Left lung (tissue), 14 donors: ENCODE measurements at regions of chr17 and their contacts with region 1.

Region 1: DNA sequence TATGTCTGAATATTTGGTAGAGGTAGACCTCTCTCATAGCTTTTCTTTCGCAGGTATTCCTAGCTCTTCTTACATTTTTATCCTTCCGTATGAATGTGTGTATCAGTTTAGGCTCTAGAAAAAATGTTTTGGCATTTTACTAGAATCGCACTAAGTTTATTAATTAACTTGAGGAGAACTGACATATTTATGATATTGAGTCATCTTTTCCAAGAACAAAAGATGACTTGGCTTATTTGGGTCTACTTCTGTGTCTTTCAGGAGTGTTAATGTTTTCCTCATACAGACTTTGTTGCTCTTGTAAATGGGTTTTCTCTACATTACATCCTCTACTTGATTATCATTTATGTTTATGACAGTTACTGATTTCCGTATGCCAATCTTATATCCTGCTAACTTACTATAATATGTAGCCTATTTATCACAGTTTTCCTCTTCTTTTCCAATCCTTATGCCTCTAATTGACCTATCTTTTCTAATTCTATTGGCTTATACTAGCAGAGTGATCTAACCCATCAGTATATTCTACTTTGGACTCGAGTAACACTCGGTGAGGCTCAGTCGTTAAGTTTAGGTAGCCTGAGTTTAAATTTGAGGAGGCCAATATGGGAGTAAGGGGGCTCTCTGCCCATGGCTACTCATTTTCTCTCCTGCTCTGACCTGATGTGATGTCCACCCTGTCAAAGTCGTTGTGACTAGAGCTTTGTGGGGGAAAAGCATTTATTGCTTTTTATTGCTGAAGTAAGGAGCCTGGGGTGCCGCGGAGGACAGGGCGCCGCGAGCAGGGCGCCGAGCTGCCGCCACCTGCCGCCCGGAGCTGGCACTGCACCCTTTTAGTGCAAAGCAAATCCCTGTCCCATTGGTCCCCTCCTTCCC is 20.0 kb downstream of the ST6GALNAC1 start:
- DNase-seq: peak; percentile 63 to 96 (median 78)
- ATAC-seq: peak; percentile 96
- H3K4me3 ChIP-seq: no peak overlapping the region
- H3K27ac ChIP-seq: no peak overlapping the region
- H3K4me1 ChIP-seq: peaks cover 0 to 6% of the 10 kb centered on the region in 2 donors
- H3K27me3 ChIP-seq: no peaks in the 10 kb centered on the region
- CTCF ChIP-seq: peak; percentile 97 to 98

Region 2: GRCh38 chr17:76562734-76563148 is 60.8 kb before region 1 on chr17:
- intact Hi-C with region 1: loop called in 1 of 2 experiments (anchors 5 kb)
- DNase-seq: peak in 1 of 4 donors; percentile 76
- ATAC-seq: peak; percentile 11
- H3K4me3 ChIP-seq: no peak overlapping the region
- H3K27ac ChIP-seq: peak overlapping the region; percentile 8 to 70
- H3K4me1 ChIP-seq: peaks cover 44 to 78% of the 10 kb centered on the region in 2 donors
- H3K27me3 ChIP-seq: no peaks in the 10 kb centered on the region
- CTCF ChIP-seq: no peak